PC-3 (cell line): ENCODE measurements at regions of chr15 and their contacts with region 1.

Region 1: DNA sequence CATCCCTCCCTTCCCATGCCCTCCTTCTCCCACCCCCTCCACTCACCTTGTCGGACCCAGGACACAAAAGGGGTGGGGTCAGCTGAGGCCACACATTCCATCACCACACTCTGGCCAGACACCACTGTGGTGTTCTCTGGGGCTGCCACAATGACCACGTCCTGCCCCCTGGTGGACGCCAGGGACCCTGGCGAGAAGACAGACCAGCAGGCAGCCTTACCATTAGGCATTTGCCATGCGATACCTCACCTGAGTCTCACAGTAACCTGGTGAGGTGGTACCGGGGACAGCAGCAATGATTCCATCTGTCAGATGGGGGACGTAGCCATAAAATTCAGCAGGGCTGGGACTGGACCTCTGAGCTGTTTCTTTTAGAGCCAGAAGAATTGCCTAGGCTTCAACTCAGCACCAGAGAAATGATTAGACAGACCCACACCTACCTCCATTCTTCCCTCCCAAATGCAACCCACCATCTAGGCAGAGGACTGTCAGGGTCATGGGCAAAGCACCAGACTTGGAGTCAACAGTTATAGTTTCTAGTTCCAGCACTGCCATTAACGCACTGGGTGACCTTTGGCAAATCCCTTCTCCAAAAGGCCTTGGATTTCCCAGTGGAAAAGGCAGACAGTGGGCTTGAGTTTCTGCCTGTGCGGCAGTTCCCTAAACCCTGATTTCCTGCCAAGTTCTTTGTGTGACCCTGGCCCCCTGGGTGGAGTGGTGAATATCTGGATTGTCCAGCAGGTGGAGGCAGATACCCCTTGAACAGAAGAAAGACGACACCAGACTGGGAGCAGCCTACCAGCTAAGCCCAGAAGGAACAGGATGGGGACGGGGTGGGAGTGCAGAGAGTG is 21.8 kb downstream of the IGDCC4 start:
- DNase-seq: peak; percentile 67
- ATAC-seq: peak; percentile 95
- H3K4me3 ChIP-seq: no peak overlapping the region
- H3K27ac ChIP-seq: no peak overlapping the region
- H3K4me1 ChIP-seq: no peaks in the 10 kb centered on the region
- H3K27me3 ChIP-seq: no peaks in the 10 kb centered on the region
- CTCF ChIP-seq: peak; percentile 66

Region 2: DNA sequence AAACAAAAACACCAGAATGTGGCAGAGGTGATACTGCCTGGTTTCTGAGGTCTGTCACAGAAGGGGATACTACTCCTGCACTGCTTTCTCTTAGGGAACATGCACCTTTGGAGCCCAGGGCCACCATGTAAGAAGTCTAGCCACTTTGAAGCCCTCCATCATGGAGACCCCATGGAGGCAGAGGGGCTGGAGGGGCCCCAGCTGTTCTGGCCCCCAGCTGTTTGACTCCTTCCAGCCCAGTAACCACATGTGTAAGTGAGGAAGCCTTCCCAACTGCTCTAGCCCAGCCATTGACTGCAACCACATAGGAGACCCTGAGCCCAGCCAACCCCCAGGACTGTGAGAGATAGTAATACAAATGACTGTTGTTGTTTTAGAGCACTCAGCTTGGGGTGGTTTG is 30.7 kb after region 1 on chr15:
- CTCF ChIA-PET with region 1: interaction called, 3 read pairs
- POLR2A ChIA-PET with region 1: no interaction called
- intact Hi-C with region 1: loop called (anchors 1 kb)
- DNase-seq: no peak
- ATAC-seq: no peak
- H3K4me3 ChIP-seq: no peak overlapping the region
- H3K27ac ChIP-seq: no peak overlapping the region
- H3K4me1 ChIP-seq: 0 out of 2 replicates have a peak, but pooled peaks cover 5% of the 10 kb centered on the region
- H3K27me3 ChIP-seq: no peaks in the 10 kb centered on the region
- CTCF ChIP-seq: no peak

Region 3: DNA sequence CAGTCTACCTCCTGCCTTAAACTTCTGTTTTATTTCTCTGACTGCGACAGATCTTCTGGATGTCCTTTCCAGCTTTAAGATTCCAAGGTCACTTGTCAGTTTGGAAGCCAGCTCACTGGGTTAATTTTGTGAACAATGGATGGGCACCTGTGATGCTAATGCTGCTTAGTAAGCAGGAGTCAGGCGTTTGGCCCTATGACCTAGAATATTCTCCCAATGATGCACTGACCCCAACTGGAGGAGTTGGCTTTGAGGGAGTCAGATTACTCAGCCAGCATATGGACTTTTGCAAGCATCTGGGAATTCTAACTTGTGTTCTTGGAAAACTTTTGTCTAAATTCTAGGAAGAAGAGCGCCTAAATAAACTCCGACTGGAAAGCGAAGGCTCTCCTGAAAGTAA is 157.4 kb after region 1 on chr15:
- CTCF ChIA-PET with region 1: no interaction called
- POLR2A ChIA-PET with region 1: no interaction called
- intact Hi-C with region 1: no loop called
- DNase-seq: no peak
- ATAC-seq: no peak
- H3K4me3 ChIP-seq: no peak overlapping the region
- H3K27ac ChIP-seq: no peak overlapping the region
- H3K4me1 ChIP-seq: no peaks in the 10 kb centered on the region
- H3K27me3 ChIP-seq: no peaks in the 10 kb centered on the region
- CTCF ChIP-seq: no peak